ENCODE measurements at regions of chr14 and their contacts with region 1.

Region 1: DNA sequence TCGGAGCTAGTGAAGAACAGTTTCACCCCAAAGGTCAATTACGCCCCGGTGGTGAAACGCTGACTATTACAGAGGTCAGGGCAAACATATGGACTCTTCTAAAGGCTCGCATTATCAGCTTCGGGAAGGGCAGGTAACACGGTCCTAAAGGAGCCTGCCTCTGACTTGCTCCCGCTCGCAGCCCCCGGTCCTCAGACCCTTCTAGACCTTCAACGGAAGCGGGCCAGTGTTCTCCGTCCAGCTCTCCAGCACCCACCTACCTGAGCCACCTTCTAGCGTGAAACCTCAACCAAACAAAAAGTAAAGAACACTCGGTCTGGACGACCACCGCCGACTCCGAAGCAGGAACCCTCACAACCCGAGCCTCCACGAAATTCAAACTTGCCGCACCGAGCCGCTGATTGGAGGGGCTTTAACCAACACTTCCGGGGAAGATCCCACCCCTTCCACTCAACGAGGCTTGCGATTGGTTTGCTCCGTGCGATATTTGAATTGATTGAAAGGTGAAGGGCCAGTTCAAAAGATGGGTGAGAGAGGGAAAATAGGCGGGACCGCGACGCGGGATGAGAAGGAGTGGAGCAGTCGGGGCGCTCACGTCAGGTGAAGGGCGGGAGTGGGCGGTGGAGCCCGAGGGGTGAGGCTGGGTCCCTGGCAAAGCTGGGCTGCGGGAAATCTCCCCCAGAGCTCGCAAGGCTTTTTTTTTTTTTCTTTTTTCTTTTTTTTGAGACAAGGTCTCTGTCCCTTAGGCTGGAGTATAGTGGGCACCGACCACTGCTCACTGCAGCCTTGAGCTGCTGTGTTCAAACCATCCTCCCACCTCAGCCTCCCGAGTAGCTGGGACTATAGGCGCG is at the start of gene DLGAP5:
- DNase-seq: peak; percentile 95
- H3K4me3 Mint-ChIP-seq: peak within 1 kb of the TSS; percentile 77
- H3K27ac Mint-ChIP-seq: peak within 1 kb of the TSS; percentile 83
- H3K4me1 Mint-ChIP-seq: peaks cover 39% of the 10 kb centered on the region
- H3K27me3 Mint-ChIP-seq: peaks cover 4% of the 10 kb centered on the region
- total RNA-seq, gene DLGAP5: 89.7 to 95.8 TPM

Region 2: GRCh38 chr14:55212634-55213033 is 21.2 kb after region 1 on chr14:
- CTCF ChIA-PET with region 1: interaction called, 10 read pairs
- POLR2A ChIA-PET with region 1: interaction called, 8 read pairs
- DNase-seq: no peak
- H3K4me3 Mint-ChIP-seq: no peak overlapping the region
- H3K27ac Mint-ChIP-seq: no peak overlapping the region
- H3K4me1 Mint-ChIP-seq: peaks cover 3% of the 10 kb centered on the region
- H3K27me3 Mint-ChIP-seq: peaks cover 5% of the 10 kb centered on the region

Region 3: GRCh38 chr14:55333711-55334485 is 142.5 kb after region 1 on chr14:
- CTCF ChIA-PET with region 1: no interaction called
- POLR2A ChIA-PET with region 1: interaction called, 10 read pairs
- DNase-seq: no peak
- H3K4me3 Mint-ChIP-seq: peak overlapping the region; percentile 76
- H3K27ac Mint-ChIP-seq: peak overlapping the region; percentile 88
- H3K4me1 Mint-ChIP-seq: peaks cover 81% of the 10 kb centered on the region
- H3K27me3 Mint-ChIP-seq: no peaks in the 10 kb centered on the region